OCI-LY7 (cell line): ENCODE measurements at regions of chr2 and their contacts with region 1.

Region 1: GRCh38 chr2:174634130-174635014 is 36.8 kb upstream of the WIPF1 start:
- DNase-seq: peak; percentile 78
- H3K4me3 ChIP-seq: peak overlapping the region; percentile 73
- H3K27ac ChIP-seq: peak overlapping the region; percentile 70
- H3K4me1 ChIP-seq: peaks cover 28% of the 10 kb centered on the region
- CTCF ChIP-seq: peak; percentile 64; the same call in 1 of the 2 replicates

Region 2: GRCh38 chr2:174465327-174465726 is 169.0 kb before region 1 on chr2:
- CTCF ChIA-PET with region 1: no interaction called
- POLR2A ChIA-PET with region 1: interaction called, 11 read pairs
- intact Hi-C with region 1: no loop called
- DNase-seq: no peak
- H3K4me3 ChIP-seq: no peak overlapping the region
- H3K27ac ChIP-seq: no peak overlapping the region
- H3K4me1 ChIP-seq: no peaks in the 10 kb centered on the region
- CTCF ChIP-seq: no peak

Region 3: GRCh38 chr2:174572556-174572955 is 61.8 kb before region 1 on chr2:
- CTCF ChIA-PET with region 1: no interaction called
- POLR2A ChIA-PET with region 1: no interaction called
- intact Hi-C with region 1: no loop called
- DNase-seq: no peak
- H3K4me3 ChIP-seq: no peak overlapping the region
- H3K27ac ChIP-seq: no peak overlapping the region
- H3K4me1 ChIP-seq: no peaks in the 10 kb centered on the region
- CTCF ChIP-seq: no peak

Region 4: GRCh38 chr2:174593574-174594203 is 40.7 kb before region 1 on chr2:
- CTCF ChIA-PET with region 1: no interaction called
- POLR2A ChIA-PET with region 1: interaction called, 81 read pairs
- intact Hi-C with region 1: loop called (anchors 1 kb)
- DNase-seq: peak; percentile 94
- H3K4me3 ChIP-seq: peak overlapping the region; percentile 79
- H3K27ac ChIP-seq: peak overlapping the region; percentile 94
- H3K4me1 ChIP-seq: peaks cover 65% of the 10 kb centered on the region
- CTCF ChIP-seq: no peak

Region 5: GRCh38 chr2:174610243-174610995 is 24.0 kb before region 1 on chr2:
- CTCF ChIA-PET with region 1: interaction called, 4 read pairs
- POLR2A ChIA-PET with region 1: interaction called, 33 read pairs
- intact Hi-C with region 1: loop called (anchors 2 kb)
- DNase-seq: peak; percentile 27
- H3K4me3 ChIP-seq: peak overlapping the region; percentile 36
- H3K27ac ChIP-seq: peak overlapping the region; percentile 64
- H3K4me1 ChIP-seq: peaks cover 96% of the 10 kb centered on the region
- CTCF ChIP-seq: no peak

Region 6: DNA sequence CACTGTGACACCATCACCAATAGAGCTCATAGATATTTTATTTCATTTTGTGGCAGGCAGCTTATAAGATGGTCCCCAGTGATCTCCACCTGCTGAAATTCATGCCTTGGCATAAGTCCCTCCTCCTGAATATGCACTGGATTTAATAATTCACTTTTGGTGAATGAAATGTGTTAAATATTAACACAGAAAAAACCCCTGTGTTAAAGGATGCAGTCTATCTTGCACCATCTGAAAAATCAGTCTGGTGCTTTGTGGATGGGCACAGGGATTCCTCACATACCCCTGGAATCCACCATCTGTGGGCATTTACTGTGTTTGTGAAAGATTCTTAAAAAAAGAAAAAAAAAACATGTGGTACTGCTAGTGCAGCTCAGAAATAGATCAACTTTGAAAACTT is 10.7 kb before region 1 on chr2:
- CTCF ChIA-PET with region 1: interaction called, 5 read pairs
- POLR2A ChIA-PET with region 1: interaction called, 15 read pairs
- intact Hi-C with region 1: no loop called
- DNase-seq: no peak
- H3K4me3 ChIP-seq: no peak overlapping the region
- H3K27ac ChIP-seq: peak overlapping the region; percentile 23
- H3K4me1 ChIP-seq: peaks cover 52% of the 10 kb centered on the region
- CTCF ChIP-seq: no peak